Spleen (tissue), 13 donors: ENCODE measurements at regions of chr9 and their contacts with region 1.

Region 1: GRCh38 chr9:75265525-75265972 is 177.2 kb downstream of the OSTF1 start:
- DNase-seq: no peak
- H3K4me3 ChIP-seq: no peak overlapping the region
- H3K27ac ChIP-seq: no peak overlapping the region
- H3K4me1 ChIP-seq: peaks cover 0 to 4% (median 0%) of the 10 kb centered on the region in 6 donors
- H3K27me3 ChIP-seq: no peaks in the 10 kb centered on the region
- CTCF ChIP-seq: peak; percentile 39 to 89 (median 81)
- POLR2A ChIP-seq: no peak

Region 2: GRCh38 chr9:75414761-75415160 is 149.2 kb after region 1 on chr9:
- intact Hi-C with region 1: no loop called
- DNase-seq: no peak
- H3K4me3 ChIP-seq: no peak overlapping the region
- H3K27ac ChIP-seq: no peak overlapping the region
- H3K4me1 ChIP-seq: no peaks in the 10 kb centered on the region
- H3K27me3 ChIP-seq: no peaks in the 10 kb centered on the region
- CTCF ChIP-seq: no peak
- POLR2A ChIP-seq: no peak

Region 3: DNA sequence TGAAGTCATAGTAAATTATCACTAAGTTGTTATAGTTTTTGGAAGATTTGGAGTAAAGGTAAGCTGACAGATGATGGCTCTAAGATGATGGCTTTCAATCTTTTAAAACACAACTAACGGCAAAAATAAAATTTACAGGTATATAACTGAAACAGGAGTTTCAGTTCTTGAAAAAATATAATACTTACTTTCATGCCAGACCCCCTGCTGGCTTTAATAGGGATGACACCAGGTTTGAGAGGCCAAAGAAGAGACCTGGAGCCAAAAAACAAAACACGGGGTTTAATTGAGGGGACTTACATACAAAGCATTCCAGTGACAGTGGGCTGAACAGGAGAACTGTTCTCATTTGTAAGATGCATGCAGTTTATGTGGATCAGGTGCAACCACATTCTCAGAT is 323.3 kb after region 1 on chr9:
- intact Hi-C with region 1: loop called (anchors 10 kb)
- DNase-seq: no peak
- H3K4me3 ChIP-seq: no peak overlapping the region
- H3K27ac ChIP-seq: no peak overlapping the region
- H3K4me1 ChIP-seq: no peaks in the 10 kb centered on the region
- H3K27me3 ChIP-seq: no peaks in the 10 kb centered on the region
- CTCF ChIP-seq: peak in 2 of 11 experiments; percentile 14 to 28
- POLR2A ChIP-seq: no peak

Region 4: GRCh38 chr9:75866273-75866871 is 600.8 kb after region 1 on chr9:
- intact Hi-C with region 1: loop called (anchors 5 kb)
- DNase-seq: no peak
- H3K4me3 ChIP-seq: no peak overlapping the region
- H3K27ac ChIP-seq: no peak overlapping the region
- H3K4me1 ChIP-seq: peaks cover 0 to 5% (median 0%) of the 10 kb centered on the region in 6 donors
- H3K27me3 ChIP-seq: peaks cover 0 to 13% (median 0%) of the 10 kb centered on the region in 7 donors
- CTCF ChIP-seq: peak in 10 of 11 experiments; percentile 27 to 83 (median 68)
- POLR2A ChIP-seq: no peak